GM10248 (cell line): ENCODE measurements at regions of chr2 and their contacts with region 1.

Region 1: GRCh38 chr2:177195194-177195593 is 17.4 kb upstream of the HNRNPA3 start:
- DNase-seq: no peak
- CTCF ChIP-seq: peak; percentile 11

Region 2: GRCh38 chr2:177183860-177184259 is 11.3 kb before region 1 on chr2:
- CTCF ChIA-PET with region 1: interaction called, 32 read pairs
- POLR2A ChIA-PET with region 1: no interaction called
- DNase-seq: no peak
- CTCF ChIP-seq: no peak

Region 3: GRCh38 chr2:177207101-177207500 is 11.9 kb after region 1 on chr2:
- CTCF ChIA-PET with region 1: interaction called, 13 read pairs
- POLR2A ChIA-PET with region 1: interaction called, 3 read pairs
- DNase-seq: peak; percentile 40
- CTCF ChIP-seq: no peak

Region 4: DNA sequence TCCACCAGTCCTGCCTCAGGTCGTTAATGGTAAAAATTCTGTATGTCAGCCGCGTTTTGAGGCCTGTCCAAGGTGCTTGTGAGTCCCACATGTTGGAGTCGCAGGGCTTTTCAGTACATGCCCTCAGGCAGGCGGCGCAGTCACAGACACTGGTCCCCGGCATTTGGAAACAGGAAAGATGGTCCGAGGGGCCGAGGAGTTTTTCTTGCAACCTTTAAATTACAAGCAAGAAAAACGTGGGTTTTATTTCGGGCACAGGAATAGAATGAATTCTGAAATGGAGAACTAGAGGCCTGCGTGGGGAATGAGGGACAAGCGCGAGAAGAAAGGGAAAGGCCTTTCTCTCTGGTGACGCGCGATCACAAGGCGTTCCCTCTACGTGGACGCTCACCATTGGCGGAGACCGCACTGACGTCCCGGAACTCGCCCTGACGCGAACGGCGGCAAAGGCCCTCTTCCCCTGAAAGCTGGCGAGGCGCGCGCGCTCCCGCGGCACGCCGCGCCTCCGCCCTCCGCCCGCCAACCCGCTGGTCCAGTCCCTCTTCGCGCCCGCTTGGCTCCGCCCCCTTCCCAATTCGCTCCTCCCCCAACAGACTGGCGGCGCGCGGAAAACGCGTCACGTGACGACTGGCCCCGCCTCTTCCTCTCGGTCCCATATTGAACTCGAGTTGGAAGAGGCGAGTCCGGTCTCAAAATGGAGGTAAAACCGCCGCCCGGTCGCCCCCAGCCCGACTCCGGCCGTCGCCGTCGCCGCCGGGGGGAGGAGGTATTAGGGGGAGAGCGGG is 17.1 kb after region 1 on chr2 and contains the start of gene HNRNPA3:
- CTCF ChIA-PET with region 1: interaction called, 10 read pairs
- POLR2A ChIA-PET with region 1: interaction called, 3 read pairs
- DNase-seq: peak; percentile 99
- CTCF ChIP-seq: no peak